ENCODE measurements at regions of chr7 and their contacts with region 1.

Region 1: DNA sequence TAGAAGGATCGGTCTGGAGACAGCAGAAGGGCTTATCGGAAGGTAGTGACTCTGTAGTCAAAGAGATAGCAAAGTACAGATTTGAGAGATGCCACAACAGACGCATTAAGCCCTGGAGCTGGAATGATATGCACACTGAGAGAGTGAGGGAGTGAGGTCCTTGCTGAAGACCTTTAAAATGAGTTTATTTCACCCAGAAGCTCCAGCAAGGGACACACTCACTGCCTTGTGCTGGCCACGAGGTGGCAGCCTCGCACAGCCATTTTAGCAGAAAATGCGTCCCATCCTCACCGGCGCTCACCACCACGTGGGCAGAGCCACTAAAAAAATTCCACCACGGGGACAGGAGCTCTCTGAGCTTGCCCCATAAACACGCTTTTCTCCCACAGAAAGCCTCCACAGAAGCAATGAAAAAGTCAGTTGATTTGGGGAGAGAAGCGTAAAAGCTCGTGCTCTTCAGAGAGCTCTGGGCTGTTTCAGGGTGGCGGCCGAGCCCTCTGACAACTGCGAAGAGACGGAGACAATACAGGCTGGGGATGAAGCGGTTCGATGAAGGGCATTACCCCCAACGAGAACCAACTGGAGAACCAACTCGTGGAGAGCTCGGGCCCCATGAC is 163.0 kb upstream of the KLF14 start:
- DNase-seq: peak; percentile 75
- H3K4me3 ChIP-seq: no peak overlapping the region
- H3K27ac ChIP-seq: peak overlapping the region; percentile 42
- H3K4me1 ChIP-seq: peaks cover 75% of the 10 kb centered on the region
- H3K27me3 ChIP-seq: no peaks in the 10 kb centered on the region
- CTCF ChIP-seq: peak; percentile 69 to 84
- POLR2A ChIP-seq: peak; percentile 39

Region 2: GRCh38 chr7:130703851-130704250 is 193.2 kb before region 1 on chr7:
- CTCF ChIA-PET with region 1: no interaction called
- POLR2A ChIA-PET with region 1: no interaction called
- dilution Hi-C with region 1: no loop called
- intact Hi-C with region 1: no loop called
- DNase-seq: no peak
- H3K4me3 ChIP-seq: no peak overlapping the region
- H3K27ac ChIP-seq: no peak overlapping the region
- H3K4me1 ChIP-seq: no peaks in the 10 kb centered on the region
- H3K27me3 ChIP-seq: peaks cover 6 to 11% of the 10 kb centered on the region in 2 experiments
- CTCF ChIP-seq: no peak
- POLR2A ChIP-seq: no peak

Region 3: DNA sequence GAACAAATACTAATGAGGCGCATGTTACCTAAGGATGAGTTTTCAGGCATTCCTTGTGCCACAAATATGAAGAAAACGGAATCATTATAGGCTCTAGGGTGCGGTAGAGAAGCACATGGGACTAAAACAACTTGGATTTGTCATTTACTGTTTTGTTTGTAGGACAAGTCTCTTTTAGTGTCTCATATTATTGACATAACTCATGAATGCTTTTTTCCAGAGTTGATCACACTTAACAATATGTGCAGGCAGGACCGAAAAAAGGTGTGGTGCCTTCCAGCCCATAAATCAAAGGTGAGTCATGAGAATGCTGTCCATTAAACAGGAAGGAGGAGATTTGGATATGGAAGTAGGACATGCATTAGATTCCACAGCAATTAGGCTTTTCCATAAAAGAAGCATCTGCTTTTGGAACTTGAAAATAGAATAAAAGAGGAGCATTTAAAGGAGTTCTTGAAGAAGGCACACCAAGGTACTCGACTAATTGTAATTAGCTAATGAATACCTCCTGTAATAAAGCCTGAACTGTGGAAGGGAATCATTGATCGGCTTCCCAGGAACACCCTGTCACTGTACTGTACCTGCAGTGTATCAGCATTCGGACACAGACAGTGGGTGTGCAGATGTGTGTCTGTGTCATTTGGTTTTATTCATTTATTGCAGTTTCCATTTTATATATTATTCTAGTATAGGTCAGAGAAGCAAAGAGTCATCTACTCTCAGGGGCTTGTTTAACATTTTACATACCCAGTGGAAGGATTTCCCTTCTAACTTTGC is 43.3 kb before region 1 on chr7:
- CTCF ChIA-PET with region 1: no interaction called
- POLR2A ChIA-PET with region 1: no interaction called
- dilution Hi-C with region 1: no loop called
- intact Hi-C with region 1: no loop called
- DNase-seq: no peak
- H3K4me3 ChIP-seq: no peak overlapping the region
- H3K27ac ChIP-seq: no peak overlapping the region
- H3K4me1 ChIP-seq: peaks cover 10% of the 10 kb centered on the region
- H3K27me3 ChIP-seq: no peaks in the 10 kb centered on the region
- CTCF ChIP-seq: no peak
- POLR2A ChIP-seq: no peak

Region 4: DNA sequence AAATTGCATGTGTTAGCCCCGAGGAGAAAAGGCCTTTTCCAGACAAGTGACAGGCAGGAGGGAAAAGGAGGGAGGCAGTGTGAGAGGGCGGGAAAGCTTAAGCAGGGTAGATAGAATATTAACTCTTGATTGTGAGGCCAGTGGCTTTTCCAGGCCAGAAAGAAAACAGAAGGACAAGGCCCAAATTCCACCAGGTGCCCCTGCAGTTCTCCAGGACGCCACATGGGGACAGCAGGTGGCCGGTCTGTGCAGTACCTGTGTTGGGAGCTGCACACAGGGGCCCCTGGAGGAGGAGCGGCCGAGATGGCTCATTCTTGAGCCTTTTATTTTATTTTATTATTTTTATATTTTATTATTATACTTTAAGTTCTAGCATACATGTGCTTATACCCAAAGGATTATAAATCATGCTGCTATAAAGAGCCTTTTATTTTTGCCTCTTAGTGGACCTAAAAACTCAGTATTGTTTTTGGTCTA is 21.7 kb before region 1 on chr7:
- CTCF ChIA-PET with region 1: interaction called, 22 read pairs
- POLR2A ChIA-PET with region 1: interaction called, 3 read pairs
- dilution Hi-C with region 1: no loop called
- intact Hi-C with region 1: loop called (anchors 1 kb)
- DNase-seq: peak; percentile 40
- H3K4me3 ChIP-seq: no peak overlapping the region
- H3K27ac ChIP-seq: no peak overlapping the region
- H3K4me1 ChIP-seq: peaks cover 5% of the 10 kb centered on the region
- H3K27me3 ChIP-seq: no peaks in the 10 kb centered on the region
- CTCF ChIP-seq: peak; percentile 58 to 84
- POLR2A ChIP-seq: peak; percentile 35

Region 5: DNA sequence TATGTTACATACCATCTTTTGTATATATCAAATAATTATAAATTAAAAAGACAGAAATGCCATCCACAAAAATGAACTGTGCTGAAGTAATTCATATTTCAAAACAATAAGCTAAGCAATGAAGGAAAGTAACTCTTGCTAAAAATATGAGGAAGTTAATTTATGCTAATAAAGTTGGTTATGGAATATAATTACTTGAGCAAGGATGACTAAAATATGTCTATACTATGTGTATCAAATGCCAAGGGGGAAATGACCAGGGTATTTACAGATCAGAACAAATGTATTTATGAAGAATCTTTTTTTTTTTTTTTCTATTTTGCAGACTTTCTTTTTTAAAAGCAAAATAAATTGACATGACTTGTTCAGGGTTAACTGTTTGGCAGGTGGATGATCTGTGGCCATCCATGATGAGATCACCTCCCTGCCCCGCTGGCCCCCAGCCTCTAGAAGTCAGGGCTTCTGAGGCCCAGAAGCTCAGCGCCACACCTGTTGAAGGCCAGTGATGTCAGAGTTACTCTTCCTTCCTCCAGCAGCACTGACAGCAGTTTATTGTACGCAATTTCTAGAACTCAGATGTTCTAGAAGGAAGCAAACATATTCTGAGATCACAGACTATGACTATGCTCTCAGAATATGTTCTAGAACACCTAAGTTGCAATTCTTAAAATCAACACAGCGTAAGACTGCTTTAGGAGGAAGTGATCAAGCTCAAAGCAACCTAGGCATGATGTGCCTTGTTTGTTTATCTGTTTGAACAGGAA is 33.1 kb after region 1 on chr7:
- CTCF ChIA-PET with region 1: interaction called, 31 read pairs
- POLR2A ChIA-PET with region 1: no interaction called
- dilution Hi-C with region 1: no loop called
- intact Hi-C with region 1: no loop called
- DNase-seq: no peak
- H3K4me3 ChIP-seq: no peak overlapping the region
- H3K27ac ChIP-seq: no peak overlapping the region
- H3K4me1 ChIP-seq: peaks cover 6% of the 10 kb centered on the region
- H3K27me3 ChIP-seq: no peaks in the 10 kb centered on the region
- CTCF ChIP-seq: no peak
- POLR2A ChIP-seq: no peak

Region 6: DNA sequence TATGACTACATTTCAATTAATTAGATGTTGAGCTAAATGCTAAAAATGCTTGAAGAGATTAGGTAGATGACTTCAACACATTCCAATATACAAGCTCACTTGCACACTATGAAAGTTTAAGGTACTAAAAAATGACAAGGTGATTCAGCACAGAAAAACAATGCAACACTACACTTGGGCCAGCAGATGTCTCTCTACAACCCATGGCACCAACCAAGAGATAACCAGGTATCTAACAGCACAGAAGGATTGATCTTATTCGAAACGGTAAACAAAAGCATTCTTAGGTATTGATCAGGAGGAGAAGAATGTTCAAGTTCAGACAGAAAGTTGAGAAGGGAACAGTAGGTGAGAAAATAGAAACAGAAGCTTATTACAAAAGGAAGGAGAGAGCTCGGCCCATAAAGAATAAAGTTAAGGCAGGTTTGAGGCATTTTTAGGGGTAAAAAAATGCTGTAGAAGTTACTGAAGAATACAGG is 85.2 kb after region 1 on chr7:
- CTCF ChIA-PET with region 1: interaction called, 34 read pairs
- POLR2A ChIA-PET with region 1: no interaction called
- dilution Hi-C with region 1: no loop called
- intact Hi-C with region 1: no loop called
- DNase-seq: peak; percentile 54
- H3K4me3 ChIP-seq: no peak overlapping the region
- H3K27ac ChIP-seq: no peak overlapping the region
- H3K4me1 ChIP-seq: no peaks in the 10 kb centered on the region
- H3K27me3 ChIP-seq: no peaks in the 10 kb centered on the region
- CTCF ChIP-seq: peak; percentile 48 to 62
- POLR2A ChIP-seq: no peak

Region 7: GRCh38 chr7:131007394-131008330 is 110.7 kb after region 1 on chr7:
- CTCF ChIA-PET with region 1: interaction called, 72 read pairs
- POLR2A ChIA-PET with region 1: interaction called, 3 read pairs
- dilution Hi-C with region 1: no loop called
- intact Hi-C with region 1: loop called (anchors 1 kb)
- DNase-seq: peak; percentile 71
- H3K4me3 ChIP-seq: no peak overlapping the region
- H3K27ac ChIP-seq: peak overlapping the region; percentile 24
- H3K4me1 ChIP-seq: peaks cover 6% of the 10 kb centered on the region
- H3K27me3 ChIP-seq: no peaks in the 10 kb centered on the region
- CTCF ChIP-seq: peak; percentile 47 to 49
- POLR2A ChIP-seq: no peak

Region 8: DNA sequence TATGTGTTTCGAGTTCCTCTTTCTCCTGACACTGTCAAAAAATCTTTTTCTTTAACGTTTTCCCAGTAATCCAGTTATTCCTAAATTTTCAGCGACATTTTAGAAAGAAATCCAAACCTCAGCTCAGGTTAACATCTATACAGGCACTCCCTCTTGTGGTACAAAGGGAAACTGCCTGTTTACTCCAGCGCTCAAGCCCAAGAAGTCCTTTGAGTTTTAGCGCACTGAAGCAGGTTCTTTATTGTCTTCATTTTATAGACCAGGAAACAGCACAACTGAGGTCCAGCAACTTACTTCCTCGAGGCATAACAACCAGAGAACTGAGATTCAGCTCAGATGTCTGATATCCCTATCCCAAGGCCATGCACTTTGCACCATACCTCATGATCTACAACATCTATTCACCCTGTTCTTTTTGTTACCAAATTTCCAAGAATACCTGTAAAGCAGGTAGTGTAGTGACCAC is 143.5 kb after region 1 on chr7:
- CTCF ChIA-PET with region 1: interaction called, 175 read pairs
- POLR2A ChIA-PET with region 1: no interaction called
- dilution Hi-C with region 1: no loop called
- intact Hi-C with region 1: loop called (anchors 1 kb)
- DNase-seq: peak; percentile 82
- H3K4me3 ChIP-seq: no peak overlapping the region
- H3K27ac ChIP-seq: no peak overlapping the region
- H3K4me1 ChIP-seq: peaks cover 9% of the 10 kb centered on the region
- H3K27me3 ChIP-seq: no peaks in the 10 kb centered on the region
- CTCF ChIP-seq: peak; percentile 81 to 83
- POLR2A ChIP-seq: no peak

Region 9: GRCh38 chr7:131488361-131488760 is 591.4 kb after region 1 on chr7:
- CTCF ChIA-PET with region 1: no interaction called
- POLR2A ChIA-PET with region 1: no interaction called
- dilution Hi-C with region 1: no loop called
- intact Hi-C with region 1: loop called (anchors 10 kb)
- DNase-seq: peak; percentile 40
- H3K4me3 ChIP-seq: no peak overlapping the region
- H3K27ac ChIP-seq: no peak overlapping the region
- H3K4me1 ChIP-seq: peaks cover 28% of the 10 kb centered on the region
- H3K27me3 ChIP-seq: no peaks in the 10 kb centered on the region
- CTCF ChIP-seq: peak in 1 of 2 donors; percentile 36
- POLR2A ChIP-seq: no peak